Dorsolateral prefrontal cortex (tissue), 120 donors: ENCODE measurements at regions of chr4 and their contacts with region 1.

Region 1: DNA sequence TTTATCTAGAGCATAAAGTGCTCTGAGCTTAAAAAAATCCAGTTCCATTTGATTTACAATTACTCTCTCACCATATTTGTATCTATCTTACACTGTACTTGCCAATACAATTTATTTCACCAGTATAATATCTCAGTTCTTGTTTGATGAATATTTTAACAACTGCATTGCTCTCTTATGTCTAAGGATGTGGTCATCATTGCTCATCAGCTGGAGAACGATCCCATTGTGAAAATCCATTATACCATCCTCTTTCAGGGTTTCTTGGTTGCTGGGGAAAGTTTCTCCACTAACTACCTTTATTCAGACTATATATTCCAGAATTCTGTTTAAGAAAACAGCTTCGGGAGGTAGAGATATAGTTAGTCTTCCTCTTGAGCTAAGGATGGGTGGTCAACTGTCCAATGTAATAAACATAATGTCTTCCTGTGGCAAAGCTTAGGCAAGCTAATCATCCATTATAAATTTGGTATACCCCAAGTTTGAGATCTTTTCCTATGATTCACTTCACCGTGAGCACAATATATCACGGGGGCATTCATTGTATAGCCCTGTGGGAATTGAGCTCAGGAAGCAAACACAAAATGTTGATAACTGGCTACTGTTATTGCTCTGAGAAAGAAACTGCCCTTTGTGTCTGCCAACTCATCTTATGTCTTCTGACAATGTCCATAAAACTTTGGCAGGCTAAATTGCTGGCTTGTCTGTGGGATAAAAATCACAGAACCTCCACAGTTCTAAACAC is 2361.9 kb downstream of the ARAP2 start:
- DNase-seq: no peak
- H3K4me3 ChIP-seq: peak overlapping the region in 1 of 59 donors; percentile 9
- H3K27ac ChIP-seq: peak overlapping the region in 22 of 59 donors; percentile 4 to 78 (median 57)
- H3K27me3 ChIP-seq: no peaks in the 10 kb centered on the region
- CTCF ChIP-seq: no peak

Region 2: GRCh38 chr4:33661636-33662035 is 220.8 kb before region 1 on chr4:
- intact Hi-C with region 1: no loop called
- DNase-seq: no peak
- H3K4me3 ChIP-seq: no peak overlapping the region
- H3K27ac ChIP-seq: no peak overlapping the region
- H3K27me3 ChIP-seq: no peaks in the 10 kb centered on the region
- CTCF ChIP-seq: no peak

Region 3: GRCh38 chr4:33831442-33832066 is 50.9 kb before region 1 on chr4:
- intact Hi-C with region 1: loop called in 1 of 2 experiments (anchors 5 kb)
- DNase-seq: no peak
- H3K4me3 ChIP-seq: no peak overlapping the region
- H3K27ac ChIP-seq: peak overlapping the region in 12 of 59 donors; percentile 12 to 62 (median 42)
- H3K27me3 ChIP-seq: no peaks in the 10 kb centered on the region
- CTCF ChIP-seq: no peak